Right ventricle myocardium inferior (tissue), 1 donor: ENCODE measurements at regions of chr12 and their contacts with region 1.

Region 1: DNA sequence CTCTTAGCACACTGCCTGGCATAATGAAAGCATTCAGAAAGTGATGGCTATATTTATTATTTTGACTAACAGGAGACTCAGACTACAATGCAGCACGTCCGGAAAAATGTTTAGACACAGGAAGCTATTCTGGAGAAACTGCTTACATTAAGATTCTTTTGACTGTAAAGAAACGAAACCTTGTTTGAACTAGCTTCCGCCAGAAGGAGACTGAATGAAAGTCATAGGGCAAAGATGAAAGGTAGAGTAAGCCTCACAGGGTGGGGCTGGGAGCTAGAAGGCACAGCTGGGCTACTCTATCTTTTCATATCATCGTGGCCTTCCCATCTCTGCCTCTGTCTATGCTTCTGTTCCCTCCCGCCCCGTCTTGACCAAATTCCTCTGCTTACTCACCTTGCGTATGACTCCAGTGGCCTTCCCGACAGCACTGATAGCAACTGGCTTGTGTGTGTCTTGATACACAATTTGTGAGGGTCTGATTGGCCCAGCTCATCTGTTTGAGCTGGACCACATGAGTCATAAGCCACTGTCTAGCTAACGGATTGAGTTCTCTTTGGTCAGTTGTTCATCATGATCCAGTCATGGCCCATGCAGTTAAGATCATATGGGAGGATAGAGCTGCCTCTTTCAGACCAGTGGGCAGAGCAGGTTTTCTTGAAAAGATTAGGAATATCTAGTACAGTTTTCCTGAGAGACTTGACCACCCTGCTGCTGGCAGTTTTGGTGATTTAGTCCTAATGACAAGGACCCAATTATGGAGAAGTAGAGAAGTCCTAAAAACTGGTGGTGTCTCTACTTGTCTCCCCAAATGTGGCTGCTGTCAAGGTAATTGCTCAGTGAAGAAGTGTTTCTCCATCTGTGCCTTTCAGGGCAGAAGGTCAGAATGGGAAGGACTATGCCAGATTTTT is 151.5 kb upstream of the SLC38A2 start:
- DNase-seq: no peak
- ATAC-seq: no peak

Region 2: GRCh38 chr12:46217541-46218321 is 306.4 kb before region 1 on chr12:
- intact Hi-C with region 1: no loop called
- DNase-seq: no peak
- ATAC-seq: no peak

Region 3: GRCh38 chr12:46372544-46373110 is 151.5 kb before region 1 on chr12 and contains the start of gene SLC38A2:
- intact Hi-C with region 1: loop called (anchors 5 kb)
- DNase-seq: peak; percentile 100
- ATAC-seq: peak; percentile 98
- total RNA-seq, gene SLC38A2: 161 TPM

Region 4: DNA sequence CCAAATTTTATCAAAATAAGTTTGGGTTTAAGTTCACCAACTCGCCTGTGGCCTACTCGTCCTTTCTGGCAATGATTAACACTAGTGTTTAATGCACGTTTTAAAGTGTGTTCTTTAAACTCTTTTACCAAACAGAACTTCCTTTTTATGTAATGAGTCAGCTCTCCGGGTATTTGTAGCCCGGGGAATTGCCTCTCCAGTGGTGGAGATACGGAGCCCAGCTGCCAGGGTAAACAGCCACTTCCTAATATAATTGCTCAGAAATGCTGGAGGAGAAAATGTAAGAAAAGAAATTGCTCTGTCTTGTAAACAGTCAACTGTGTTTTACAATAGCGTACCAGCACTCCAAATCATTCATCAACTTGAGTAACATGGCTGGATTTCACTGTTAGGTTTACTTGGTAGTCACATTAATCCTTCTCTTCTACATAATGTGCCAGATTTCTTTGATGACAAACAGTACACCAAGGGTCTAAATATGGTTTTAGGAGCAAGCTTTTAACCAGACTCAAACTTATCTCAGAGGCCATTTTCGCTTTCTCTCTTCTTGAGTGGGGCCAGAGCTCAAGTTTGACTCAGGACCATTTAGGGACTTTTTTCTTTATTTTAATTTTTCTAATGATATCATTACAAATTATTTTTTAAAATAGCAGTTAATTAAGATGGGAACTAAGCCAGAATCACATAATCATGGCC is 50.3 kb before region 1 on chr12:
- intact Hi-C with region 1: loop called (anchors 5 kb)
- DNase-seq: no peak
- ATAC-seq: peak; percentile 87

Region 5: GRCh38 chr12:46562625-46563228 is 38.6 kb after region 1 on chr12:
- intact Hi-C with region 1: no loop called
- DNase-seq: no peak
- ATAC-seq: no peak

Region 6: GRCh38 chr12:46818654-46819053 is 294.5 kb after region 1 on chr12:
- intact Hi-C with region 1: no loop called
- DNase-seq: no peak
- ATAC-seq: no peak